Breast epithelium (tissue), 4 donors: ENCODE measurements at regions of chr21 and their contacts with region 1.

Region 1: GRCh38 chr21:41446571-41446970 is 20.5 kb downstream of the MX1 start:
- DNase-seq: no peak
- H3K4me3 ChIP-seq: no peak overlapping the region
- H3K27ac ChIP-seq: no peak overlapping the region
- H3K4me1 ChIP-seq: no peaks in the 10 kb centered on the region
- H3K27me3 ChIP-seq: no peaks in the 10 kb centered on the region
- CTCF ChIP-seq: no peak
- POLR2A ChIP-seq: no peak

Region 2: DNA sequence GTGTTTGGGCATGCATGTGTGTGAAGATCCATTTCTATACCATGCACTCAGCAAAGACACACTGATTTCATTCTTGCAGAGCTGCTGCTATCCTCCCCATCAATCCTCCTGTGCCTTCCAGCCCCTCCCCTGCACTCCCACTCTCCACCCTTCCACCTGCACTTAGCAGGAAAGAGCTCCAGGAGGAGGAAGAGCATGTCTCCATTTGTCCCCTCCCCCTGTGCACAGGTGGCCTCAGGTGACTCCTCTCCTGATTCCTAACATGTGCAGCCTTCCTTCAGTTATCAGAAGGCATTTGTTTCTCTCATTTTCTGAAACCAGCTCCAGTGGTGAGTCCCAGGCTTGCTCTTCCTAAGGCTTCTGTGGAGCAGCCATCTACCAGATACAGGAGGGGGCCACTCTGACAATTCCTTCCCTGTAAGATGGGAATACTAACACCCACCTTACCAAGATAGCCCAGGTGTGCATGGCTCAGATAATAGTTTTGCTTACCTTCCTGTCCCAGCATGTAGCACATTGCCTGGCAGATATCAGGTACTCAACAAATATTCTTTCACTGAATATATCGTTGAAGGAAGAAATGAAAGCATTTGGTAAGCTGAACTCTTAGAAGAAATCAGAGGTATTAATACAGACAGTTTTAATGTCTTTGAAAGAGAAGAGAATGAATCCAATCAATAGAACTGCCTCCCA is 151.9 kb before region 1 on chr21:
- intact Hi-C with region 1: loop called (anchors 10 kb)
- DNase-seq: no peak
- H3K4me3 ChIP-seq: no peak overlapping the region
- H3K27ac ChIP-seq: no peak overlapping the region
- H3K4me1 ChIP-seq: no peaks in the 10 kb centered on the region
- H3K27me3 ChIP-seq: no peaks in the 10 kb centered on the region
- CTCF ChIP-seq: no peak
- POLR2A ChIP-seq: no peak